Testis (tissue), 5 donors: ENCODE measurements at regions of chr21 and their contacts with region 1.

Region 1: DNA sequence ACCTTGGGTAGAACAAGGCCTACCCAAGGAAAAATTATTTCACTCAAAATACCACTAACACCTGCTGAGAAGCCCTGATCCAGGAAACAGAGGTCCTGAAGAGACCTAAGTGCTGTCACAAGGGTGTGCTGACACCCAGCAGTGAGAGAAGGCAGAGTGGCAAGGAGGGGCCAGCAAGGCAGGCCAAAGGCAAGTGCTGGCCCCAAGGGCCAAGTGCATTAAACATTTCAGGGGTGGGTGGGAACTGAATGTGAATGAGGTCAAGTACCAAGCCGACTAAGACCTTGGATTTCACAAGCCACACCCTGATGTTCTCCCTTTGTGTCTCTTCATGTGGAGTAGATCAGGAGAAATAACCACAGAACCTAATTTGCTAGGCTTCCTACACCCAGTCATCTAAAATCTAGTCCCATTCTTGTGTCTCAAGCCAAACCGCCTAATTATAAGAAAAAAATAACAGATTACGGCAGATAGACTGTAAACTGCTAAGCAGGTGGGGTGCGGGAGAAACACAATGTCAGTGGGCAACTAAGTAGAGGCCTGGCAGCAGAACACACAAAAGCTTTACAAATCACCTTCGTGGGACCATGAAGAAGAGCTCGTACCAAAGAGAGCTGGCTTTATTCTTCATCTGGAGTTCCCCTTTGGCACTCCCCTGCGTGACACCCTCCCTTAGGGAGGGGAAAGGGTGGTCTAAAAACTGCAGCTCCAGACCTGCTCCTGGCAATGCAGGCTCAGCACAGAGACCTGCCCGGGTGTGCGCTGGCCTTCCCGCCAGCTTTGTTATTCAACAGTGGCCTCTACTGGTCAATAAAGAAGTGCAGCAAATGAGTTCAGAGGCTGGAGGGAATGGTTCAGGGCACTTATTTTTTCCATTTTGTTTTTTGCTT is 8.7 kb downstream of the UBE2G2 start:
- DNase-seq: peak; percentile 59
- H3K4me3 ChIP-seq: no peak overlapping the region
- H3K27ac ChIP-seq: no peak overlapping the region
- H3K4me1 ChIP-seq: no peaks in the 10 kb centered on the region
- H3K27me3 ChIP-seq: no peaks in the 10 kb centered on the region
- CTCF ChIP-seq: peak; percentile 51 to 69 (median 66)
- POLR2A ChIP-seq: no peak

Region 2: GRCh38 chr21:44510508-44511210 is 282.3 kb before region 1 on chr21:
- intact Hi-C with region 1: loop called (anchors 10 kb)
- DNase-seq: peak; percentile 72
- H3K4me3 ChIP-seq: peak overlapping the region in 1 of 2 donors; percentile 29
- H3K27ac ChIP-seq: no peak overlapping the region
- H3K4me1 ChIP-seq: no peaks in the 10 kb centered on the region
- H3K27me3 ChIP-seq: no peaks in the 10 kb centered on the region
- CTCF ChIP-seq: peak; percentile 65 to 88 (median 79)
- POLR2A ChIP-seq: no peak

Region 3: GRCh38 chr21:44982558-44983244 is 189.8 kb after region 1 on chr21:
- intact Hi-C with region 1: no loop called
- DNase-seq: peak; percentile 73
- H3K4me3 ChIP-seq: no peak overlapping the region
- H3K27ac ChIP-seq: no peak overlapping the region
- H3K4me1 ChIP-seq: no peaks in the 10 kb centered on the region
- H3K27me3 ChIP-seq: no peaks in the 10 kb centered on the region
- CTCF ChIP-seq: no peak
- POLR2A ChIP-seq: no peak